Naive thymus-derived CD4-positive, alpha-beta T cell (primary cell): ENCODE measurements at regions of chr10 and their contacts with region 1.

Region 1: GRCh38 chr10:13099666-13100348 is at the start of gene OPTN:
- DNase-seq: peak; percentile 61 to 85 (median 80)
- ATAC-seq: peak; percentile 90
- H3K4me3 ChIP-seq: peak within 1 kb of the TSS; percentile 82
- H3K4me3 Mint-ChIP-seq: peak within 1 kb of the TSS; percentile 83 to 97 (median 96)
- H3K27ac ChIP-seq: peak within 1 kb of the TSS; percentile 92
- H3K27ac Mint-ChIP-seq: peak within 1 kb of the TSS; percentile 88 to 98 (median 94)
- H3K4me1 ChIP-seq: peaks cover 6 to 21% of the 10 kb centered on the region in 2 donors
- H3K4me1 Mint-ChIP-seq: peaks cover 28 to 52% (median 49%) of the 10 kb centered on the region in 7 donors
- H3K27me3 ChIP-seq: no peaks in the 10 kb centered on the region
- H3K27me3 Mint-ChIP-seq: no peaks in the 10 kb centered on the region
- total RNA-seq, gene OPTN: 59.3 to 146 (median 60.0) TPM

Region 2: DNA sequence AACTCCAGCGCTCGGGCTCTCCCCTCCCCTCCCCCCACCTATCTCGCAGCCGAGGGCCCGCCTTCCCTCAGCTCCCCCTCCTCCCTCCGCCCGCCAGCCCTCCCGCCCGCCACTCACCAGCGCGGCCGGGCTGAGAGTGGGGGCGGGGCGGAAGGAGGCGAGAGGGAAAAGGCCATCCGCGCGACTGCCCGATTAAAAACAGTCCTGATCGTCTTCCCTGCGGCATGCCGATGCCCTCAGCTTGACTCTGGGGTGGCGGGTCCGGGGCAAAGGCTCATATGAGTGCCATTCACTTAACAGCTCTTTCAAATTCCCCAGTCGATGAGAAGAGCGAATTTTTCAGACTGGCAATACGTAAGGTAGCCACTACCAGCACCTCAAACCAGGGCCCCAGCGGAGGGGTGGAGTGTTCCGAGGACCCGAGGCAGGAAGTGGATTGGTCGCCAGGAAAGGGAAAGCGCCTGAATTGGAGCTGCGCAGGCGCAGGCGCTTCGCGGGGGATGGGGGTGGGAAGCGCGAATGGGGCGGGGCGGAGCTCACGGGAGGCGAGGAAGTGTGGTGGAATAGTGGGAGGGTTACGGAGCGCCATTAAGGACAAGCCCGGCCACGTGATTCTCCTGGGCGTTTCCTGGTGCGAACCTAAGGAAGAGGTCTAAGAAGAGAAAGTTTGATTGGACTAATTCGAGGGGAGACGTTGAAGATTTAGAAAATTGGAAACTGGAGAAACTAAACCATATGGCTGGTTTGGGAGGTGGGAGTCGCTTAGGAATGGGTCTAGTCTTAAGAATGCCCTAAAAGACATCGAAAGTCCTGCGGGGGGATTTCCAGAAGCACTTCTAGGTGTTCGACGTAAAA is 1056.8 kb before region 1 on chr10 and contains the start of gene UPF2:
- CTCF ChIA-PET with region 1: no interaction called
- POLR2A ChIA-PET with region 1: no interaction called
- intact Hi-C with region 1: loop called in 1 of 2 experiments (anchors 1 kb)
- DNase-seq: peak; percentile 95 to 98 (median 97)
- ATAC-seq: peak; percentile 93
- H3K4me3 ChIP-seq: peak within 1 kb of the TSS; percentile 83
- H3K4me3 Mint-ChIP-seq: peak within 1 kb of the TSS; percentile 87 to 100 (median 95)
- H3K27ac ChIP-seq: peak within 1 kb of the TSS; percentile 92
- H3K27ac Mint-ChIP-seq: peak within 1 kb of the TSS; percentile 98 to 100 (median 99)
- H3K4me1 ChIP-seq: peaks cover 10 to 16% of the 10 kb centered on the region in 2 donors
- H3K4me1 Mint-ChIP-seq: peaks cover 13 to 47% (median 40%) of the 10 kb centered on the region in 7 donors
- H3K27me3 ChIP-seq: no peaks in the 10 kb centered on the region
- H3K27me3 Mint-ChIP-seq: peaks cover 0 to 3% (median 0%) of the 10 kb centered on the region in 5 donors
- total RNA-seq, gene UPF2: 27.2 to 40.5 (median 36.3) TPM

Region 3: DNA sequence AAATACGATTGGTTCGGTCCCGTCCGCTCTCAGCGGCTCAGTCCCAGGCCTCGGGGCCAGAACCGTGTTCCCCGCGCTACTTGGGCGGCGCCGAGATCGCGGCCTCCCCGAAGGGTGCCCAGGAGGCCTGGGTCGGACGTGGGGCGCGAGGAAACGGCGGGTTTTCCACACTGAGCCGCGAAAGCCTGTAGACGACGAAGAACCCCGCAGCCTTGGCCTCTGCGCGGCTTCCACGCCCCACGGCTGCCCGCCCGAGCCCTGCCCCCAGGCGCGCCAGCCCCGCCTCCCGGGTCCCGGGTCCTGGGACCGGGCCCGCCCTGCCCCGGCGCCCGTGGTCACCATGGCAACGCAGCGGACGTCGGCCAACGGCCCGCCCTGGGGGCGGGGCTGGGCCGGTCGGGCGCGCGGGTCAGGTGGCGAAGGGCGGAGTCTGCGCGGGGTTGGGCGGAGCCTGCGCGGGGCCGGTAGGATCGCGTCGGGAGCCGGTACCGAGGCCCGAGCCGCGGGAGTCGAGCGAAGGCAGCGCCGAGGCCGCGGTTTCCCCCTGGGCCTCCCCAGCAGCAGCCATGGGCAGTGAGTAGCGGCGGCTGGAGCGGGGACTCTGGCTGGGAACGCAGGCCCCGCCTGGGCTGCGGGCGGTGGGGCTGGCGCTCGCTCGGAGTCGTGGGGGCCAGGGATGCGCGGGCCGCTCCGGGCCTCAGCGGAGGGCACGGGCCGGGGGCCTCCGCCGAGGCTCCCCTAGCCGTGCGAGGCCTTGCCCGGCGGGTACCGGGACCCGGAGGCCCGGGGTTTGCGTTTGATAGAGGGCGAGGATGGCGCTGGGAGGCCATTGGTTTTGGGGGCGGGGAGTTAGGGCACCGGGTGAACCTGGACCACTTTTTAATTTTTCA is 970.3 kb before region 1 on chr10 and contains the start of gene SEC61A2:
- CTCF ChIA-PET with region 1: no interaction called
- POLR2A ChIA-PET with region 1: no interaction called
- intact Hi-C with region 1: loop called in 1 of 2 experiments (anchors 2 kb)
- DNase-seq: peak; percentile 89 to 100 (median 95)
- ATAC-seq: peak; percentile 96
- H3K4me3 ChIP-seq: peak within 1 kb of the TSS; percentile 48
- H3K4me3 Mint-ChIP-seq: peak within 1 kb of the TSS; percentile 83 to 93 (median 89)
- H3K27ac ChIP-seq: peak within 1 kb of the TSS; percentile 85
- H3K27ac Mint-ChIP-seq: peak within 1 kb of the TSS; percentile 52 to 93 (median 83)
- H3K4me1 ChIP-seq: peaks cover 5 to 12% of the 10 kb centered on the region in 2 donors
- H3K4me1 Mint-ChIP-seq: peaks cover 12 to 35% (median 26%) of the 10 kb centered on the region in 7 donors
- H3K27me3 ChIP-seq: no peaks in the 10 kb centered on the region
- H3K27me3 Mint-ChIP-seq: no peaks in the 10 kb centered on the region
- total RNA-seq, gene SEC61A2: 7.8 to 15.7 (median 12.7) TPM

Region 4: GRCh38 chr10:12710594-12711349 is 389.0 kb before region 1 on chr10:
- CTCF ChIA-PET with region 1: interaction called, 3 read pairs
- POLR2A ChIA-PET with region 1: no interaction called
- intact Hi-C with region 1: loop called in 1 of 2 experiments (anchors 5 kb)
- DNase-seq: peak; percentile 50 to 83 (median 71)
- ATAC-seq: peak; percentile 89
- H3K4me3 ChIP-seq: no peak overlapping the region
- H3K4me3 Mint-ChIP-seq: peak overlapping the region in 1 of 10 donors; percentile 42
- H3K27ac ChIP-seq: no peak overlapping the region
- H3K27ac Mint-ChIP-seq: peak overlapping the region in 4 of 9 donors; percentile 4 to 79 (median 46)
- H3K4me1 ChIP-seq: no peaks in the 10 kb centered on the region
- H3K4me1 Mint-ChIP-seq: peaks cover 5 to 53% (median 8%) of the 10 kb centered on the region in 7 donors
- H3K27me3 ChIP-seq: no peaks in the 10 kb centered on the region
- H3K27me3 Mint-ChIP-seq: no peaks in the 10 kb centered on the region

Region 5: GRCh38 chr10:12902135-12902572 is 197.7 kb before region 1 on chr10:
- CTCF ChIA-PET with region 1: no interaction called
- POLR2A ChIA-PET with region 1: no interaction called
- intact Hi-C with region 1: loop called (anchors 1 to 5 kb)
- DNase-seq: peak in 8 of 9 donors; percentile 2 to 53 (median 32)
- ATAC-seq: peak; percentile 52
- H3K4me3 ChIP-seq: no peak overlapping the region
- H3K4me3 Mint-ChIP-seq: no peak overlapping the region
- H3K27ac ChIP-seq: no peak overlapping the region
- H3K27ac Mint-ChIP-seq: no peak overlapping the region
- H3K4me1 ChIP-seq: no peaks in the 10 kb centered on the region
- H3K4me1 Mint-ChIP-seq: peaks cover 0 to 3% (median 0%) of the 10 kb centered on the region in 7 donors
- H3K27me3 ChIP-seq: no peaks in the 10 kb centered on the region
- H3K27me3 Mint-ChIP-seq: peaks cover 4 to 26% (median 13%) of the 10 kb centered on the region in 5 donors

Region 6: DNA sequence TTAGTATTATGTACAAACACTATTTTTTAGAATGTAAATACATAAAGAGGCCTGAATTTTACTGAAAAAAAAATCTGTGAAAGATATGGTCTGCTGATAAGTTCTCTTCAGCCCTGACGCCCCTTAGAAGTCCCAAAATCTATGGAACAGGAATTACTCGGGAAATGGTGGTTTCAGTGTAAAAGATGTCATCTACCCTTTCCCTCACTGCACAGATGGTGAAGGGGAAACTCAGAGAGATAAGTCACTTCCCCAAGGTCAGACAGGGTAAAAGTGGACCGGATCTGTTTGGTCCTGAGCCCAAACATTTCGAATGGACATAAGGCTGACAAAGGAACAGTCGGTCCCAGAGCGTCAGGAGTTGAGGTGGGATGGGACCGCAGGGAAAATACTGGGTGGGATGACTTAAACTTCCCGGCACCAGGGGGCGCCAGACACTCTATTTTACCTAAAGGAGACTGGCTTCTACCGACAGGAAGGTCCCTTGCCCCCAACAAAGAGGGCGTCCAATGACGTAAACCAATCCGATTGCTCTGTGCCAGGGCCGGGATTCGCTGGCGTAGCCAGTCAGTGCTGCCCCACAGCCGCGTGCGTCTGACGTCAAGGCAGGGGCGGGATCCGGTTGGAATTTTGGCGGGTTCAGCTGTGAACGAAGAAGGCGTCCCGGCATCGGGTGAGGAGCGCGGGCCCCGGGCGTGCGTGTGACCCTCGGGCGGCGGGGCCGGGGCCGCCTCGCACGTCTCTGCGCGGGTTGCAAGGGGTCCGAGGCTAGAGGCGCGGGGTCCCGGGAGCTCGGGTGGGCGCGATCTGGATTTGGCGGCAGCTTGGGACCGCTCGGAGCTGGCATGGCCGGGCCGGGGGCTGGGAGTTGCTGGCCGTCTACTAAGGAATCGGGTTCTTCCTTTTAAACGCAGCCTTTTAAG is 61.4 kb after region 1 on chr10 and contains the start of gene MCM10:
- CTCF ChIA-PET with region 1: interaction called, 3 read pairs
- POLR2A ChIA-PET with region 1: no interaction called
- intact Hi-C with region 1: loop called (anchors 1 to 2 kb)
- DNase-seq: peak; percentile 86 to 99 (median 96)
- ATAC-seq: peak; percentile 100
- H3K4me3 ChIP-seq: peak within 1 kb of the TSS; percentile 47
- H3K4me3 Mint-ChIP-seq: peak within 1 kb of the TSS; percentile 64 to 93 (median 88)
- H3K27ac ChIP-seq: no peak within 1 kb of the TSS
- H3K27ac Mint-ChIP-seq: peak within 1 kb of the TSS; percentile 44 to 89 (median 74)
- H3K4me1 ChIP-seq: peaks cover 6 to 10% of the 10 kb centered on the region in 2 donors
- H3K4me1 Mint-ChIP-seq: peaks cover 3 to 38% (median 19%) of the 10 kb centered on the region in 7 donors
- H3K27me3 ChIP-seq: no peaks in the 10 kb centered on the region
- H3K27me3 Mint-ChIP-seq: peaks cover 0 to 2% (median 0%) of the 10 kb centered on the region in 5 donors
- total RNA-seq, gene MCM10: 0.08 to 41.8 (median 0.42) TPM